ENCODE measurements at regions of chr20 and their contacts with region 1.

Region 1: GRCh38 chr20:20003031-20003954 is 13.9 kb upstream of the NAA20 start:
- DNase-seq: peak in 3 of 35 experiments; percentile 10 to 22 (median 15)
- ATAC-seq: peak in 3 of 4 experiments; percentile 24 to 76 (median 52)
- H3K4me3 ChIP-seq: no peak overlapping the region
- H3K4me3 Mint-ChIP-seq: peak overlapping the region; percentile 67 to 71 (median 70)
- H3K27ac ChIP-seq: no peak overlapping the region
- H3K27ac Mint-ChIP-seq: no peak overlapping the region
- H3K4me1 ChIP-seq: no peaks in the 10 kb centered on the region
- H3K4me1 Mint-ChIP-seq: peaks cover 14 to 15% (median 15%) of the 10 kb centered on the region in 3 donors
- H3K27me3 ChIP-seq: peaks cover 0 to 39% of the 10 kb centered on the region in 2 experiments
- H3K27me3 Mint-ChIP-seq: peaks cover 38 to 49% of the 10 kb centered on the region in 2 donors

Region 2: GRCh38 chr20:21272279-21272678 is 1269.0 kb after region 1 on chr20:
- CTCF ChIA-PET with region 1: no interaction called
- POLR2A ChIA-PET with region 1: interaction called in 1 of 2 experiments, 13 read pairs
- DNase-seq: no peak
- ATAC-seq: no peak
- H3K4me3 ChIP-seq: no peak overlapping the region
- H3K4me3 Mint-ChIP-seq: no peak overlapping the region
- H3K27ac ChIP-seq: no peak overlapping the region
- H3K27ac Mint-ChIP-seq: no peak overlapping the region
- H3K4me1 ChIP-seq: no peaks in the 10 kb centered on the region
- H3K4me1 Mint-ChIP-seq: no peaks in the 10 kb centered on the region
- H3K27me3 ChIP-seq: peaks cover 4 to 26% of the 10 kb centered on the region in 2 experiments
- H3K27me3 Mint-ChIP-seq: peaks cover 24 to 32% of the 10 kb centered on the region in 2 donors

Measured in T-cell (primary cell).